Heart right ventricle (tissue), 16 donors: ENCODE measurements at regions of chr13 and their contacts with region 1.

Region 1: DNA sequence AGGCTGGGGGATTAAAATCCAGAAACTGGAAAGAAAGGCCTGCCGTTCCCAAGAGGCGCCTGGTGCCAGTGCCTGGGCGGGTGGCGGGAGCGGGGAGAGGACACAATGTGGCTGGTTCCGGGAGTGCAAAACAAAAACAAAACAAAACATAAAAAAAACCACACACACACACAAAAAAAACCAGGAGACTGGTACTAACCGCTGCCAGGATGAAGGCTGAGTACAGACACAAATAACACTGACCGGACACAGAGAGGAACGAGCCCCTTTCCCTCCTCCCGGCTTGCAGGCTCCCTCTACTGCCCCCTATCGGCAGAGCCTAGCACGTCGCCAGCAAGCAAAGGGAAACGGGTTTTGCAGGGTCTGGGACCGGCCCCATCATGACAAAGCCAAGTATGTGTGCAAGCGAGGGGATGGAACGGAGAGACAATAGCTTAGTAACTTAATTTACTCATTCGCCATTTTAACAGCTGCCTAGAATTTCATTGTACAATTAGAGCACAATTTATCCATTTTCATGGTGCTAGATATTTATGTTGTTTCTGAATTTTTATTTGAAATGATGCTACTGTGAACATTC is 17.9 kb upstream of the ZDHHC20 start:
- DNase-seq: peak; percentile 81 to 86
- ATAC-seq: peak; percentile 80 to 91 (median 87)
- H3K4me3 ChIP-seq: peak overlapping the region in 9 of 10 donors; percentile 23 to 57 (median 50)
- H3K27ac ChIP-seq: peak overlapping the region in 6 of 10 donors; percentile 3 to 66 (median 48)
- H3K4me1 ChIP-seq: peaks cover 0 to 20% (median 9%) of the 10 kb centered on the region in 9 donors
- H3K27me3 ChIP-seq: no peaks in the 10 kb centered on the region
- CTCF ChIP-seq: peak; percentile 93 to 99 (median 98)

Region 2: DNA sequence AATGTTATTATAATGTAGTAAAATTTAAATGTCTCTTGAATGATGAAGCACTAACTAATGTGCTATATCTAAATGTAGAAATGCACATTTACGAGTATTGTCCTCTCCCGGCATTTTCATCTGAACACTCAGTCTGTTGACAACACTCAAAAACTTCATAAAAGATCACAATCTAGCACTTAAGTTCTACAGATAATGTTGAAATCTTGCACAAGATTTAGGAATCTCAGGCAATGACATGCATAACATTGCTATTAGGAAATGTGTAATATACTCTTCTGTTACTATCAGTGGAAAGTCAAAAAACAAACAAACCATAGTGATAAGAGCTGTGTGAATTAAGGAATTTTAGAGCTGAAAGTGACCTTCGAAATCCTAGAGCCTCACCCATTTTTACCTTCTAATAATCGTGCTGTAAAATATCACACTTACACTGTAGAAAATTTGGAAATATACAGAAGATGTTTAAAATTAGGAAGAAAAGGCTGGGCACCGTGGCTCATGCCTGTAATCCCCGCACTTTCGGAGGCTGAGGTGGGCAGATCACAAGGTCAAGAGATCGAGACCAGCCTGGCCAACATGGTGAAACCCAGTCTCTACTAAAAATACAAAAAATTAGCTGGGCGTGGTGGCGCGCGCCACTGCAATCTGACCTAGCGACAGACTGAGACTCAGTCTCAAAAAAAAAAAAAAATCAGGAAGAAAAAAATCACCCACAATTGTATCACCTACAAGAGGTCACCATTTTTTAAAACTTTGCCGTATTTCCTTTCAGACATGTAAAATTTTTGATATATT is 536.7 kb before region 1 on chr13:
- intact Hi-C with region 1: loop called (anchors 2 to 10 kb)
- DNase-seq: no peak
- ATAC-seq: no peak
- H3K4me3 ChIP-seq: no peak overlapping the region
- H3K27ac ChIP-seq: peak overlapping the region in 5 of 10 donors; percentile 59 to 69 (median 64)
- H3K4me1 ChIP-seq: peaks cover 0 to 15% (median 5%) of the 10 kb centered on the region in 9 donors
- H3K27me3 ChIP-seq: peaks cover 0 to 4% (median 0%) of the 10 kb centered on the region in 7 donors
- CTCF ChIP-seq: no peak

Region 3: DNA sequence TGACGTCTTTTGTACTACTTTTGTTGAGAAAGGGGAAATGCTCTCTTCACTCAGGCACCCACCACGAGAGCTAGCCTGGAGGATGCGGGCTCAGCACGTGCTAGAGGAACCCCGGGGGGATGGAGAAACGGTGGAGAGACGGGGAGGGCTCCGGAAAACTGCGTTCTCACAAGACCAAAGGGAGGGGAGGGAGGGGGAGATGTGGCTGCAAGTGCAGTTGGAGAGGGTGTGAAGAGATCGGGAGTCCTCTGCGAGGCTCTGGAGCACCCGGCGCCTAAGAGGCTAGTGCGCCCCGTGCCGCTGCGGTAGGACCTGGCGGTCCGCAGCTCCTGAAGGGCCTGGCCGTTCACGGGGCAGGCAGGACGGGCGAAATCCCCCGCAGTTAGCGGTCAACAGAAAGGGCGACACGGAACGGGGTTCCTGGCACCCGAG is 531.0 kb before region 1 on chr13:
- intact Hi-C with region 1: loop called (anchors 2 to 10 kb)
- DNase-seq: peak in 1 of 2 donors; percentile 26
- ATAC-seq: peak in 6 of 8 donors; percentile 20 to 63 (median 28)
- H3K4me3 ChIP-seq: peak overlapping the region in 8 of 10 donors; percentile 11 to 39 (median 28)
- H3K27ac ChIP-seq: no peak overlapping the region
- H3K4me1 ChIP-seq: peaks cover 0 to 17% (median 4%) of the 10 kb centered on the region in 9 donors
- H3K27me3 ChIP-seq: peaks cover 0 to 21% (median 8%) of the 10 kb centered on the region in 7 donors
- CTCF ChIP-seq: no peak

Region 4: DNA sequence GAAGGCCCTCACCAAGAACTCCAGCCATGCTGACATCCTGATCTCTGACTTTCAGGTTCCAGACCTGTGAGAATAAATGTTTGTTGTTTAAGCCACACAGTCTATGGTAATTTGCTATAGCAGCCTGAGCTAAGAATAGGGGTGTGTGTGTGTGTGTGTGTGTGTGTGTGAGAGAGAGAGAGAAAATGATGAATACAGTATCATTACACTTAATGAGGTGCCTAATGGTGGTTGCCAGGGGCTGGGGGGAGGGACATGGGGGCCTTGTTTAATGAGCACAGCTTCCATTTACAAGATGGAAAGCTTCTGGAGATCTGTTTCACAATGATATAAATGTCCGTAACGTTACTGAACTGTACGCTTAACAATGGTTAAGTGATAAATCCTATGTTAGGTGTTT is 361.8 kb before region 1 on chr13:
- intact Hi-C with region 1: loop called in 7 of 10 experiments (anchors 2 to 10 kb)
- DNase-seq: no peak
- ATAC-seq: no peak
- H3K4me3 ChIP-seq: no peak overlapping the region
- H3K27ac ChIP-seq: no peak overlapping the region
- H3K4me1 ChIP-seq: no peaks in the 10 kb centered on the region
- H3K27me3 ChIP-seq: no peaks in the 10 kb centered on the region
- CTCF ChIP-seq: no peak

Region 5: DNA sequence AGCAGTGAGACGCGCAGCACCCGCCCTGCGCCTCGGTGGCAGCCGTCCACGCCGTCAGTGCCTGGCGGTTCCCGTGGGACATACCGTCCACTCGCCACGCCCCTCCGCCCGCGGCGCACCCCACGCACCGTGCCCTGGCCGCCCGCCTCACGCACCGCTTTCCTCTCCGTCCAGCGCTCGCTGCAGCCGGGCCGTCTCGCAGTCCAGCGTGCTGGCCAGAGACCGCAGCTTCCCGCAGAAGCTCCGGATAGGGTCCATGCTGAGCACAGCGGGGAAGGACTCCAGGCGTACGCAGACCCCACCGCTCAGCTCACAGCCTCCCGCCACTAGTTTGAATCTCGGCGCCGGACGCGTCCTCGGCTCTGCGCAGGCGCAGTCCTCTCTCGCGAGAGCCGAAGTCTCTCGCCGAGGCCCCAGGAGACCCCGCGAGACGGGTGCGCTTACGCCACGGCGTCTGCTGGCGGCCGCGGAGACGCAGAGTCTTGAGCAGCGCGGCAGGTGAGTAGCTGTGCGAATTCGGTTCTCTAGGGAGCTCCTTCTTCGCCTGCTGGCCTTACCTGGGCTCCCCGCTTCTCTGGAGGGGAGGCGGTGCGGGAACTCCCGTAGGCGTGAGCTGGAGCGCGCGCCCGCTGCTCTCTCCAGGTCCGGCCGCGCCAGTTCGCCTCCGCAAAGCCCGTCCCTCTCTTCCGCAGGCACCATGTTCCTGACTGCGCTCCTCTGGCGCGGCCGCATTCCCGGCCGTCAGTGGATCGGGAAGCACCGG is 300.6 kb before region 1 on chr13 and contains the starts of genes MRPL57 and SKA3:
- intact Hi-C with region 1: loop called in 1 of 10 experiments (anchors 5 kb)
- DNase-seq: peak; percentile 90 to 94
- ATAC-seq: peak; percentile 98 to 100 (median 99)
- H3K4me3 ChIP-seq: peak within 1 kb of the TSS; percentile 72 to 98 (median 84)
- H3K27ac ChIP-seq: peak within 1 kb of the TSS; percentile 92 to 99 (median 96)
- H3K4me1 ChIP-seq: peaks cover 3 to 29% (median 16%) of the 10 kb centered on the region in 9 donors
- H3K27me3 ChIP-seq: no peaks in the 10 kb centered on the region
- CTCF ChIP-seq: peak in 4 of 9 donors; percentile 15 to 31 (median 22)
- total RNA-seq, gene MRPL57: 20.0 to 25.9 (median 22.9) TPM
- total RNA-seq, gene SKA3: 0.07 to 1.8 (median 0.23) TPM in 9 of 10 donors, not detected in the other

Region 6: GRCh38 chr13:21297914-21298831 is 178.8 kb before region 1 on chr13:
- intact Hi-C with region 1: loop called (anchors 1 to 10 kb)
- DNase-seq: peak; percentile 83 to 85
- ATAC-seq: peak; percentile 99 to 100 (median 100)
- H3K4me3 ChIP-seq: peak overlapping the region; percentile 69 to 99 (median 86)
- H3K27ac ChIP-seq: peak overlapping the region in 9 of 10 donors; percentile 67 to 76 (median 71)
- H3K4me1 ChIP-seq: peaks cover 5 to 25% (median 20%) of the 10 kb centered on the region in 9 donors
- H3K27me3 ChIP-seq: no peaks in the 10 kb centered on the region
- CTCF ChIP-seq: peak; percentile 78 to 97 (median 90)

Region 7: GRCh38 chr13:21371011-21371410 is 106.0 kb before region 1 on chr13:
- intact Hi-C with region 1: loop called in 1 of 10 experiments (anchors 10 kb)
- DNase-seq: no peak
- ATAC-seq: no peak
- H3K4me3 ChIP-seq: no peak overlapping the region
- H3K27ac ChIP-seq: no peak overlapping the region
- H3K4me1 ChIP-seq: no peaks in the 10 kb centered on the region
- H3K27me3 ChIP-seq: no peaks in the 10 kb centered on the region
- CTCF ChIP-seq: no peak

Region 8: GRCh38 chr13:21932996-21933395 is 456.0 kb after region 1 on chr13:
- intact Hi-C with region 1: no loop called
- DNase-seq: no peak
- ATAC-seq: no peak
- H3K4me3 ChIP-seq: no peak overlapping the region
- H3K27ac ChIP-seq: no peak overlapping the region
- H3K4me1 ChIP-seq: no peaks in the 10 kb centered on the region
- H3K27me3 ChIP-seq: peaks cover 0 to 7% (median 0%) of the 10 kb centered on the region in 7 donors
- CTCF ChIP-seq: no peak

Region 9: DNA sequence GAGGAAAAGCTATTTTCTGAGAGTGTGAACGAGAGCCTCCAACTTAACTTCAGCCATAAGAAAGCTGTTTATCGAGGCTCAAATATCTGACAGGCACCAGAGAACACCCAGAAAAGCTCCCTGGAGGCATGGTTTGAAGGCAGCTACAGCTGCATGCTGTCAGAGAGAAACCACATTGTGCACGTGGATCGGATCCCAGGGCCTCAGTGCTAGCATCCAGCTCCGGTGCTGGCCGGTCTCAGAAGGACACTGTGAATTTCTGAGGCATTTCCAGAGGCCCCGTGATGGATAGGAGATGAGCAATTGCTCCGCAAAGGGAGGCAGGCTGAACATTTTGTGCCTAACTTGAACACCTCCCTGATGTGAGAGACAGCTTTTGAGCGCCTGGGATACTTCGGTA is 509.6 kb after region 1 on chr13:
- intact Hi-C with region 1: no loop called
- DNase-seq: peak; percentile 28 to 39
- ATAC-seq: peak; percentile 69 to 94 (median 88)
- H3K4me3 ChIP-seq: no peak overlapping the region
- H3K27ac ChIP-seq: peak overlapping the region in 5 of 10 donors; percentile 33 to 67 (median 60)
- H3K4me1 ChIP-seq: no peaks in the 10 kb centered on the region
- H3K27me3 ChIP-seq: peaks cover 0 to 6% (median 0%) of the 10 kb centered on the region in 7 donors
- CTCF ChIP-seq: no peak